CD4-positive, alpha-beta T cell (primary cell): ENCODE measurements at regions of chr7 and their contacts with region 1.

Region 1: GRCh38 chr7:106827626-106828025 is 37.5 kb upstream of the PIK3CG start:
- DNase-seq: no peak
- ATAC-seq: no peak
- H3K4me3 ChIP-seq: no peak overlapping the region
- H3K4me3 Mint-ChIP-seq: no peak overlapping the region
- H3K27ac ChIP-seq: no peak overlapping the region
- H3K27ac Mint-ChIP-seq: no peak overlapping the region
- H3K4me1 ChIP-seq: no peaks in the 10 kb centered on the region
- H3K4me1 Mint-ChIP-seq: no peaks in the 10 kb centered on the region
- H3K27me3 ChIP-seq: no peaks in the 10 kb centered on the region
- H3K27me3 Mint-ChIP-seq: no peaks in the 10 kb centered on the region
- CTCF ChIP-seq: no peak

Region 2: DNA sequence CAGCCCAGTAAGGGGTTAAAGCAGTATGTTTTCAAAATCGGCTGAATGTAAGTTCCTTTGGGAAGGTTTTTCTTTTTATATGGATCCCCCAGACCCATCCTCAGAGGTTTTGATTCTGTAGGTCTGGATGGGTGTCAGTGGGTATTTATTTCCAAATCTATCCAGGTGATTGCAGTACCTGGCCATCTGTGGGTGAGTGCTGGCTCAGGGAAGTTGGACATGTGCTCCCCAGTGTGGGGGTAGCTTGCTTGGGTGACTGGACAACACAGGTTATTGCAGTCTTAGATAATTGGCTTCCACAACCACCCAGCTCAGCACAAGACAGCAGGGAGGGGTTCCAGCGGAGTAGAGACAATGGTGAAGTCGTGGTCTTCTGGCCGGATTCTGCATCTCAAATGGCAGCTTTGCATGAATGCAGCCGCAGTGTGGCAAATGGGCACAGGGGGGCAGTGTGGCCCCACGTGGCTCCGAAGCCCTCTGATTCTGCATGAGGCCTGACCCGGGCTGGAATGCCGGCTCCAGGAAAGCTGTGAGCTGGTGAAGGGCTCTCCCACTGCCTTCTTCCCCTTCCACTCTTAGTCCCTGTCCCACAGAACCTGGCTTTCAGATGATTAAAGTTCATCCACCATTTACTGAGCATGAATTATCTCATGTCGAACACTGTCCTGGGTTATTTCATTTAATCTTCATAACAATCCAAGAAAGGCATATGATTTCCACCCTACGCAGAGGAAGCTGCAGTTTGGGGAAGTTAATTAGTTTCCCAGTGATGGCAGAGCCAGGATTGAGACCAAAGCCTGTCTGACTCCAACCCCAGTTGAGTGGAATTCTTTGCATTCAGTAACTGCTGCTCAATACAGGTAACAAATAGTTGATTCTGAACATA is 651.0 kb before region 1 on chr7:
- CTCF ChIA-PET with region 1: no interaction called
- POLR2A ChIA-PET with region 1: no interaction called
- intact Hi-C with region 1: no loop called
- DNase-seq: peak; percentile 37 to 79 (median 61)
- ATAC-seq: peak; percentile 82
- H3K4me3 ChIP-seq: no peak overlapping the region
- H3K4me3 Mint-ChIP-seq: no peak overlapping the region
- H3K27ac ChIP-seq: no peak overlapping the region
- H3K27ac Mint-ChIP-seq: no peak overlapping the region
- H3K4me1 ChIP-seq: peaks cover 6% of the 10 kb centered on the region
- H3K4me1 Mint-ChIP-seq: peaks cover 5% of the 10 kb centered on the region
- H3K27me3 ChIP-seq: peaks cover 0 to 4% of the 10 kb centered on the region in 2 experiments
- H3K27me3 Mint-ChIP-seq: peaks cover 19% of the 10 kb centered on the region
- CTCF ChIP-seq: peak; percentile 95

Region 3: GRCh38 chr7:106887421-106887820 is 59.8 kb after region 1 on chr7:
- CTCF ChIA-PET with region 1: no interaction called
- POLR2A ChIA-PET with region 1: no interaction called
- intact Hi-C with region 1: loop called in 1 of 2 experiments (anchors 5 kb)
- DNase-seq: no peak
- ATAC-seq: no peak
- H3K4me3 ChIP-seq: no peak overlapping the region
- H3K4me3 Mint-ChIP-seq: no peak overlapping the region
- H3K27ac ChIP-seq: no peak overlapping the region
- H3K27ac Mint-ChIP-seq: no peak overlapping the region
- H3K4me1 ChIP-seq: no peaks in the 10 kb centered on the region
- H3K4me1 Mint-ChIP-seq: peaks cover 5% of the 10 kb centered on the region
- H3K27me3 ChIP-seq: no peaks in the 10 kb centered on the region
- H3K27me3 Mint-ChIP-seq: no peaks in the 10 kb centered on the region
- CTCF ChIP-seq: no peak